ENCODE measurements at regions of chr20 and their contacts with region 1.

Region 1: GRCh38 chr20:39036011-39036410 is 73.9 kb downstream of the DHX35 start:
- DNase-seq: no peak
- ATAC-seq: no peak
- H3K4me3 ChIP-seq: no peak overlapping the region
- H3K27ac ChIP-seq: no peak overlapping the region
- H3K4me1 ChIP-seq: no peaks in the 10 kb centered on the region; a peak in 1 of 5 replicates
- H3K27me3 ChIP-seq: no peaks in the 10 kb centered on the region
- CTCF ChIP-seq: no peak
- EP300 ChIP-seq: no peak
- POLR2A ChIP-seq: no peak
- RAD21 ChIP-seq: no peak

Region 2: DNA sequence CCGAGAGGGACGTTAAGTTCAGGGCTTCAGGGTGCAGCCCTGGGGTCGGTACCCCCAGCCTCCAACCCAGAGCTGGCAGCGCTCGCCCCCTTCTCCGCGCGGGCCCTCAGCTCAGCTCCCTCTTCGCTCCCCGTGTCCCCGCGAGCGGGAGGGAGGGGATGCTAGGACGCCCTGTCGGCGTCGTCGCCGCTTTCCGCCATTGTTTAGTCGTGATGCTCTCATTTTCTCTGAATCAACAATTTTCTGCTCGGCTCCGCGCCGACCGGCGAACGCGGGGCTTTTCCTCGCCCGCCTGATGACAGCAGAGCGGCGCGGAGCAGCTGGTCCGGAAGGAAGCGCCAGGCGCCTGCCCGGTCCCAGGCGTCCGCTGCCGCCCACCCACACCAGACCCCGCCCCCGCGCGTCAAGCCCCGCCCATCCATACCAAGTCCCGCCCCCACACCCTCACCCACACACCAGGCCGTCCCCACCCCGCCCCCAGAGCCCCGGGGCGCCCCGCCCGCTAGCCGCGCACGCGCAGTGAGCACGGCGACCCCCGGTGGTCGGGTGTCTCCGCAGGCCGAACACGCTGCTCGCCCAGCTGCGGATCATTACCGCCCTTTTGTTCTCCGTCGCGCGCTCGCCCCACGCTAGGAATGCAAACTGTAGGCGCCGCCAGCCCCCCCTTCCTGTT is 361.8 kb before region 1 on chr20:
- CTCF ChIA-PET with region 1: no interaction called
- POLR2A ChIA-PET with region 1: no interaction called
- in situ Hi-C with region 1: no loop called
- intact Hi-C with region 1: no loop called
- DNase-seq: peak; percentile 88 to 99 (median 98)
- ATAC-seq: peak; percentile 96
- H3K4me3 ChIP-seq: peak overlapping the region; percentile 64
- H3K27ac ChIP-seq: peak overlapping the region; percentile 78
- H3K4me1 ChIP-seq: peaks cover 4 to 14% of the 10 kb centered on the region in 2 experiments; a peak in 4 of 5 replicates
- H3K27me3 ChIP-seq: no peaks in the 10 kb centered on the region
- CTCF ChIP-seq: no peak
- EP300 ChIP-seq: no peak
- POLR2A ChIP-seq: peak; percentile 85
- RAD21 ChIP-seq: no peak

Region 3: GRCh38 chr20:38932457-38933120 is 103.4 kb before region 1 on chr20:
- CTCF ChIA-PET with region 1: no interaction called
- POLR2A ChIA-PET with region 1: no interaction called
- in situ Hi-C with region 1: loop called (anchors 5 kb)
- intact Hi-C with region 1: no loop called
- DNase-seq: no peak
- ATAC-seq: no peak
- H3K4me3 ChIP-seq: peak overlapping the region; percentile 14; the same call in 1 of the 2 replicates
- H3K27ac ChIP-seq: peak overlapping the region; percentile 35; the same call in 2 of the 3 replicates
- H3K4me1 ChIP-seq: peaks cover 8 to 53% of the 10 kb centered on the region in 2 experiments; a peak in 3 of 5 replicates
- H3K27me3 ChIP-seq: no peaks in the 10 kb centered on the region
- CTCF ChIP-seq: no peak
- EP300 ChIP-seq: no peak
- POLR2A ChIP-seq: no peak
- RAD21 ChIP-seq: no peak

Region 4: GRCh38 chr20:39105549-39105948 is 69.5 kb after region 1 on chr20:
- CTCF ChIA-PET with region 1: no interaction called
- POLR2A ChIA-PET with region 1: no interaction called
- in situ Hi-C with region 1: no loop called
- intact Hi-C with region 1: no loop called
- DNase-seq: peak; percentile 25 to 48 (median 34)
- ATAC-seq: peak; percentile 74; the same call in 2 of the 3 replicates
- H3K4me3 ChIP-seq: no peak overlapping the region
- H3K27ac ChIP-seq: no peak overlapping the region
- H3K4me1 ChIP-seq: no peaks in the 10 kb centered on the region
- H3K27me3 ChIP-seq: peaks cover 0 to 6% of the 10 kb centered on the region in 2 experiments; a peak in 2 of 5 replicates
- CTCF ChIP-seq: peak; percentile 48 to 57 (median 55)
- EP300 ChIP-seq: no peak
- POLR2A ChIP-seq: no peak
- RAD21 ChIP-seq: peak in 1 of 2 experiments; percentile 43; a peak in 2 of 4 replicates

Measured in K562 (cell line).